ENCODE measurements at regions of chr14 and their contacts with region 1.

Region 1: GRCh38 chr14:87334997-87335685 is 657.8 kb downstream of the GALC start:
- DNase-seq: no peak
- H3K4me3 ChIP-seq: no peak overlapping the region
- H3K27ac ChIP-seq: no peak overlapping the region
- H3K4me1 ChIP-seq: no peaks in the 10 kb centered on the region
- H3K27me3 ChIP-seq: no peaks in the 10 kb centered on the region
- CTCF ChIP-seq: no peak
- EP300 ChIP-seq: no peak
- POLR2A ChIP-seq: no peak

Region 2: DNA sequence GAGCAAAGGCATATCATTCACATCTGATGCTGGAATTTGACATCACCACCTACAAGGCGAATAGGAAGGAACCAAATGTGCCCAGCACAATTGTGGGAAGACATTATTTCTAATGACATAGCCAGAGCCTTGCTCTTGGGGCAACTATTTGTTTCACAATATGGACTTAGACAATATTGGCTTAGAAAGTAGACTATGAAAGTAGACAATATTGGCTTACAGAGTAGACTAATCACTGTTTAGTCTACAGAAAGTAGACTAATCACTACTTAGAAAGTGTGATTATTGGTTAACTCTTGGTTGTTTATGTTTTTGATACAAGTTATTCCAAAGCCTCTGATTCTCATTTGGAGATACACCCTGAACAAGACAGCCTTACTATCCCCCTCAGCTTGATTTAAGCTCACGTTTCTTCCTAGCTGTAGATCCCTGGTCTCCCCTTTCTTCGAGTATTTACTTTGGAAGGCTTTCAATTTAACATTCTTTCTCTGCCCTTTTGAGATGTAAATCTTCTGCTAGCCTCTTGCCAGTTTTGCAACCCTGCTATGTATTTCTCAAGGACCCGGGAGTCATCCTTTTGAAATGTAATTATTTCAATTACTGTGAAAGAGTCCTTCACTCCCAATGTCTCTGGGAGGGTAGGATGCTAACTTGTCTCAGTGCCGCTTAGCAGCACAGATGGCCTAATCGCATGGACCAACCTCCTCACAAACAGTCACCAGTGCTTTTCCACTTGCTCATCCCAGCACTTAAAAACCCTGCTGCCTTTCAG is 185.4 kb before region 1 on chr14:
- intact Hi-C with region 1: loop called in 1 of 4 experiments (anchors 10 kb)
- DNase-seq: no peak
- H3K4me3 ChIP-seq: no peak overlapping the region
- H3K27ac ChIP-seq: no peak overlapping the region
- H3K4me1 ChIP-seq: no peaks in the 10 kb centered on the region
- H3K27me3 ChIP-seq: no peaks in the 10 kb centered on the region
- CTCF ChIP-seq: no peak
- EP300 ChIP-seq: no peak
- POLR2A ChIP-seq: no peak

Measured in ovary (tissue), 10 donors.